BJ (cell line): ENCODE measurements at regions of chr2 and their contacts with region 1.

Region 1: GRCh38 chr2:200829258-200829655 is 17.5 kb downstream of the BZW1 start:
- DNase-seq: no peak
- H3K4me3 ChIP-seq: no peak overlapping the region
- H3K27me3 ChIP-seq: no peaks in the 10 kb centered on the region
- CTCF ChIP-seq: no peak

Region 2: DNA sequence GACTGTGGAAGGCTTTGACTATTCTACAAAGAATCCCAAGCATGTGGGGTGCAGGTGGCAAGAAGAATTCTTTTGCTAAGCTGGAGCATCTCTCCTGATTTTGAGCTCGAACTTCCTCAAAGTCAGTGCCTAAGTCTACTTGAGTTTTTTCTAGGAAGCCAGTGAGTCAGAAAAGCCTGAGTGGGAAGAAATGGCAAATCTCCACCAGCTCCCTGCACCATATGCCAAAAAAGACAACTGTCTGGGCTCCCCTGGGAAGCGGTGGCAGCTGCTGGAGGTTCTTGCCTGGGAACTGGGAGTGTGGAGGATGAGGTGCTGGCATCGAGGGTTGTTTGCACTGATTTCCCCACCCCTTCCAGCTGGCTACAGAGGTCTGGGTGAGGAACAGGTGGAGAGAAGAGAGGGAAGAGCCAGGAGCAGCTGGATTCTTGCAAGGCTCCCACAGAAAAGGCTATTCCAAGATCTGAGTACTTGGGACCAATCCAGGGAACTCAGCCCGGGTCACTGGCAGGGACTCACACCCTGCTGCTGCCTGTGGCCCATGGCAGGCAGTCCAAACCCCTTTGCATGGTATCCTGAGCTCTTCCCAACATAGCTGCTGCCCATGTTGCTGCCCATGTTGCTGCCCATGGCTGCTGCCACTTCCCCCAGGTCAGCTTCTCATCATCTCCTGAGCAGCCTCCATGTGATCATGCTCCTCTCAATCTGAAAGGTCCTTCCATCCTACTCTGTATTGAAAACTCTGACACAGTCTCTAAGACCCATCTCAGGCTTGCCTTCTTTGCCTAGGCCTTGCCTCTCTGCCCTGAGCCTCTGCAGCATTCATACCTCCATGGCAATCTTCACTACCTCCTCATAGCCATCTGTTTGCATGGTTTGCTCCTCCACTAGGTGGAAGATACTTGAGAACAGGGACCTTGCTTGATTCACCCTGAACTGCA is 651.0 kb before region 1 on chr2:
- CTCF ChIA-PET with region 1: no interaction called
- POLR2A ChIA-PET with region 1: interaction called, 10 read pairs
- DNase-seq: peak; percentile 43
- H3K4me3 ChIP-seq: no peak overlapping the region
- H3K27me3 ChIP-seq: peaks cover 10% of the 10 kb centered on the region
- CTCF ChIP-seq: no peak